Activated CD4-positive, alpha-beta T cell treated with anti-CD3 and anti-CD28 coated beads for 36 hours (primary cell): ENCODE measurements at regions of chr7 and their contacts with region 1.

Region 1: GRCh38 chr7:65872776-65873581 is at the start of gene VKORC1L1:
- DNase-seq: peak; percentile 98
- ATAC-seq: peak; percentile 96
- H3K4me3 Mint-ChIP-seq: peak within 1 kb of the TSS; percentile 84
- H3K27ac Mint-ChIP-seq: peak within 1 kb of the TSS; percentile 75
- H3K4me1 Mint-ChIP-seq: peaks cover 7% of the 10 kb centered on the region
- H3K27me3 Mint-ChIP-seq: no peaks in the 10 kb centered on the region
- total RNA-seq, gene VKORC1L1: 16.5 to 17.6 TPM

Region 2: DNA sequence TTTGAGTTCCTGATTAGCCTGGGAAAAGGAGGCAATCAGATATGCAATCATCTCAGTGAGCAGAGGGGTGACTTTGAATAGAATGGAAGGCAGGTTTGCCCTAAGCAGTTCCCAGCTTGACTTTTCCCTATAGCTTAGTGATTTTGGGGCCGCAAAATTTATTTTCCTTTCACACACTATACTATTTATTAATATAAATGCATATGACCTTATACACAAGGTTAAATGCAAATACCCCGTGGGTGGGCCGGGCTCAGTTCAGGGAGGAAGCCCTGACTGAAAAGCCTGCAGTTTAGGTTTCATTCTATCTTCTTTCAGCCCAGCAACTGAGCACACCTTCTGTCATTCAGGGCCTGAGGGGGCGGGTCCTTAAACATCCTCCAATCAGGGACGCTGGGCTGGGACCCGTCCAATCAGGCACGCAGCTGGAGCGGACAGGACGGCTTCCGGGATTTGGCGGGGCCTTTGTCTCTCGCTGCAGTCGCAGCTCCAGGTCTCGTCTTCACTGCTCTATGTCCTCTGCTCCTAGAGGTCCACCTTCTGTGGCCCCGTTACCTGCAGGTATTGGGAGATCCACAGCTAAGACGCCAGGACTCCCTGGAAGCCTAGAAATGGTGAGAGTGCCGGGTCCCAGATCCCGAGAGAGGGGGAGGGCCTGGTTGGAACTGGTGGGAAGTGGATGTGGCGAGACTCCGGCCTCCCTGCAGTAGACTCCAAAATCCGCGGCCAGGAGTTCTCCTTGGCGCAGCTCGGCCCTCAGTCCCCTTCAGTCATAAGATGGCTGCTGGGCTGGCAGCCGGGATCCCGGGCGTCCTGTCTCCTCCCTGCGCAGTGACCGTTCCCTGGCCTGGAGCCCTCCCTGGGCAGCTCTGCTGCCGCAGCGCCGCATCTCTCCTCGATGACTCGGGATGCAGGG is 969.9 kb before region 1 on chr7 and contains the start of gene ZNF273:
- CTCF ChIA-PET with region 1: no interaction called
- POLR2A ChIA-PET with region 1: no interaction called
- intact Hi-C with region 1: loop called in 1 of 2 experiments (anchors 1 kb)
- DNase-seq: peak; percentile 96
- ATAC-seq: peak; percentile 100
- H3K4me3 Mint-ChIP-seq: peak within 1 kb of the TSS; percentile 98
- H3K27ac Mint-ChIP-seq: peak within 1 kb of the TSS; percentile 95
- H3K4me1 Mint-ChIP-seq: peaks cover 44% of the 10 kb centered on the region
- H3K27me3 Mint-ChIP-seq: no peaks in the 10 kb centered on the region
- total RNA-seq, gene ZNF273: 12.5 to 13.3 TPM

Region 3: DNA sequence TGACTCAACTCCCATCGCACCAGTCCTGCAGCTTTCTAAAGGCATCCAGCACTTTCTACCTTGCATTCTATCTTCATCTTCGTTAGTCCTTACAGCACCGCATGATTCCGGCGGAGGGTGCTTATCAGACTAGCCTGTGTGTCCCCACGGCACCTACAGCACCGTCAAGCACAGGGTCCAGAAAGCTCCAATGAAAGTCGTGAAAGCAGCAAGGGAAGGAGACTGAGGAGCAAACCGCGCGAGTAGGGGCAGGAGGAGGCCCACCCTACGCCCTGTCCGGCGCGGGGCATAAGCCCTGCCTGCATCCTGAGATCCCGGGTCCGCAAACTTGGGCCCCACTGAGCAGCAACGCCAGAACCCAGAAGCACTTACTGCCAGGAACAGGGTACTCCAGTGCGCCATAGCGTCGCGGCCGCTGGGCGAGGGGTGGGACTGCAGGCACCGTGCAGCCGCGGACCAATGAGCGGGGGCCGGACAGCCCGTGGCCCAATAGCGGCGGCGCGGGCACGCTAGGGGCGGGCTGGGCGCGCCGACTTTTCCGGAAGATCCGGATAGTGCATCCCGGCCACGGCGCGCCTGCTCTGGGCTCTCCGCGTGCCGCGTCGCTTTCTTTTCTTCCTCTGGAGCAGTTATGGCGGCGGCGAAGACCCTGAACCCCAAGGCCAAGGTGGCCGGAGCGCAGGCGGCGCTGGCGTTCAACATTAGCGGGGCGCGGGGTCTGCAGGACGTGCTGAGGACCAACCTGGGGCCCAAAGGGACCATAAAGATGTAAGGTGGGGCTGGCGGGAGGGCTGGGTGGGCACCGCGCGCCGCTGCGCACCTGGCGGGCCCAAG is 122.3 kb before region 1 on chr7:
- CTCF ChIA-PET with region 1: no interaction called
- POLR2A ChIA-PET with region 1: no interaction called
- intact Hi-C with region 1: loop called (anchors 1 to 2 kb)
- DNase-seq: peak; percentile 93
- ATAC-seq: peak; percentile 99
- H3K4me3 Mint-ChIP-seq: peak overlapping the region; percentile 95
- H3K27ac Mint-ChIP-seq: peak overlapping the region; percentile 94
- H3K4me1 Mint-ChIP-seq: peaks cover 31% of the 10 kb centered on the region
- H3K27me3 Mint-ChIP-seq: no peaks in the 10 kb centered on the region

Region 4: DNA sequence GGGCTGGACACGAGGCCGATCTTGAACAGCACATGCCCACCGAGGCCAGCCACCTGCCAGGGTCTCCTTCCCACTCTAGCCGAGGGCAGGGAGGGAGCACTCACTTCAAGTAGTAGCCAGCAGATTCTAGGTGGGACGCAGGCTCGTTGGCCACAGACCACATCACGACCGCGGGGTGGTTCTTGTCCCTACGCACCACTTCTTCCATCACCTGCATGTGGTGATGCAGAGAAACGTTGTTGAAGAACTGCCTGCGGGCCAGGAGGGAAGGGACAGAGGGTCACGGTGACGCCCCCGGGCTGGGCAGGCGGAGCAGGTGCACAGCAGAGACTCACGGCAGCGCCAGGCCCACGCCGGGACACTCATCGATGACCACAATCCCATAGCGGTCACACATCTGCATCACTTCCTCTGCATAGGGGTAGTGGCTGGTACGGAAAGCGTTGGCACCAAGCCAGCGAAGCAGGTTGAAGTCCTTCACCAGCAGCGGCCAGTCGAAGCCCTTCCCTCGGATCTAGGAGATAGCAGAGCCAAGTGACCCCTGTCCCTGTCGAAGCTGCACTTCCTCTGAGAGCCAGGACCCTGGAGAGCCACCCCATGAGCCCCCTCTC is 101.3 kb after region 1 on chr7:
- CTCF ChIA-PET with region 1: no interaction called
- POLR2A ChIA-PET with region 1: no interaction called
- intact Hi-C with region 1: no loop called
- DNase-seq: no peak
- ATAC-seq: no peak
- H3K4me3 Mint-ChIP-seq: no peak overlapping the region
- H3K27ac Mint-ChIP-seq: no peak overlapping the region
- H3K4me1 Mint-ChIP-seq: no peaks in the 10 kb centered on the region
- H3K27me3 Mint-ChIP-seq: no peaks in the 10 kb centered on the region

Region 5: DNA sequence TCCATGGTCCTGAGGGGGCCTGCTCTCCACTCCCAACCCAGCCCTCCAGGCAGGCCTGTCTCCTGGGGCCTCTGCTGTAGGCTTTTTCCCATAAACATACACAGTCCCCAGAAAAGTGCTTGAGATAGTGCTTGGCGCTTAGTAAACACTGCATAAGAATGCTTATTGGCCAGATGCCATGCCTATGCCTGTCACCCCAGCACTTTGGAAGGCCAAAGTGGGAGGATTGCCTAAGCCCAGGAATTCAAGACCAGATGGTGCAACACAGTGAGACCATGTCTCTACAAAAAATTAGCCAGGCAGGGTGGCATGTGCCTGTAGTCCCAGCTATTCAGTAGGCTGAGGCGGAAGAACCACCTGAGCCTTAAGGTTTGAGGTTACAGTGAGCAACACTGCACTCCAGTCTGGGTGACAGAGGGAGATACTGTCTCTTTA is 178.0 kb after region 1 on chr7:
- CTCF ChIA-PET with region 1: no interaction called
- POLR2A ChIA-PET with region 1: no interaction called
- intact Hi-C with region 1: no loop called
- DNase-seq: no peak
- ATAC-seq: no peak
- H3K4me3 Mint-ChIP-seq: no peak overlapping the region
- H3K27ac Mint-ChIP-seq: no peak overlapping the region
- H3K4me1 Mint-ChIP-seq: peaks cover 4% of the 10 kb centered on the region
- H3K27me3 Mint-ChIP-seq: no peaks in the 10 kb centered on the region

Region 6: GRCh38 chr7:66075590-66076461 is 202.8 kb after region 1 on chr7 and contains the start of gene ASL:
- CTCF ChIA-PET with region 1: no interaction called
- POLR2A ChIA-PET with region 1: no interaction called
- intact Hi-C with region 1: loop called in 1 of 2 experiments (anchors 1 kb)
- DNase-seq: peak; percentile 94
- ATAC-seq: peak; percentile 99
- H3K4me3 Mint-ChIP-seq: peak within 1 kb of the TSS; percentile 63
- H3K27ac Mint-ChIP-seq: no peak within 1 kb of the TSS
- H3K4me1 Mint-ChIP-seq: peaks cover 15% of the 10 kb centered on the region
- H3K27me3 Mint-ChIP-seq: no peaks in the 10 kb centered on the region
- total RNA-seq, gene ASL: 12.7 to 18.5 TPM

Region 7: DNA sequence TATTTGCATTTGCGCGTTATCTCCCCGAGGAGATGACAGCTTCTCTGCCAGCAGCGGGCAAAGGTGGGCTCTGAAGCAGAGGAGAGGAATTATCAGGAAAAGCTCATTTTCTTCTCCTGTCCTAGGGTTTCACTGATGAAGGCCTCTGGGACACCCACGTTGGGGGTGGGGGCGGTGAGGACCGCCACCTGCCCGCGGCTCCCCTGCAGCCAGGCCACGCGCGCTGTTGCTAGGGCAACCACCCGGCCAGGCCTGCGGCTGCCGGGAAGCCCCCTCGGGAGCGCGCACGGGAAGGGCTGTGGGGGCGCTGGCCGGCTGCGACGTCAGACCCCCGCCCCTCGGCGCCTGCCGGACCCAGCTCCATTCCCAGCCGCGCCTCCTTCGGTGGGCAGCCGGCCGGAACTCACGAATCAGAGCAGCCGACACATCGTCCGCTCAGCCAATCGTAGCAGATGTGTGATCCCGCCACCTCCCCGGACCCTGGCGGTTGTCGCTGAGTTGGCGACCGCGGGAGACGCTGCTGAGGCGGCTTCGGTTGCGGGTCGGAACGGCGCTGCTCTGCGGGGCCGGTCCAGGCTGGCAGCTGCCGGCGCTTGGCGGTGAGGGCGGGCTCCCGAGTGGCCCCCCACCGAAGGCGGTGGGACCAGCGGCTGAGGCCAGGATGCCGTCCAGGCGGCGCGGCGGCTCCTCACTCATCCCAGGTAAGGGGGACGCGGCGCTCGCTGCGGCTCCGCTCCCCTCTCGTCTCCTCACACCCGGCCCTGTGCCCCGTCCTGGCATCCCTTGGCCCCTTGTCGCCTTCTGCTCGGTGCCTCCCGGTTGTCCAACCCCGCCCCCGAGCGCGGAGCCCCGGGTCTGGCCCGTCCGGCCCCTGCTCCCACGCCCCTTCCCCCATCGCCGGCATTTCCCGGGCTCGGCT is 332.1 kb after region 1 on chr7 and contains the start of gene TPST1:
- CTCF ChIA-PET with region 1: no interaction called
- POLR2A ChIA-PET with region 1: no interaction called
- intact Hi-C with region 1: loop called in 1 of 2 experiments (anchors 1 kb)
- DNase-seq: peak; percentile 88
- ATAC-seq: peak; percentile 96
- H3K4me3 Mint-ChIP-seq: peak within 1 kb of the TSS; percentile 81
- H3K27ac Mint-ChIP-seq: peak within 1 kb of the TSS; percentile 32
- H3K4me1 Mint-ChIP-seq: peaks cover 33% of the 10 kb centered on the region
- H3K27me3 Mint-ChIP-seq: peaks cover 17% of the 10 kb centered on the region
- total RNA-seq, gene TPST1: 1.0 to 1.1 TPM

Region 8: GRCh38 chr7:66740302-66740979 is 867.5 kb after region 1 on chr7 and contains the start of gene RABGEF1:
- CTCF ChIA-PET with region 1: no interaction called
- POLR2A ChIA-PET with region 1: no interaction called
- intact Hi-C with region 1: loop called in 1 of 2 experiments (anchors 1 kb)
- DNase-seq: peak; percentile 98
- ATAC-seq: peak; percentile 89
- H3K4me3 Mint-ChIP-seq: peak within 1 kb of the TSS; percentile 98
- H3K27ac Mint-ChIP-seq: peak within 1 kb of the TSS; percentile 91
- H3K4me1 Mint-ChIP-seq: peaks cover 34% of the 10 kb centered on the region
- H3K27me3 Mint-ChIP-seq: no peaks in the 10 kb centered on the region
- total RNA-seq, gene RABGEF1: 19.3 to 22.5 TPM